Naive thymus-derived CD4-positive, alpha-beta T cell (primary cell): ENCODE measurements at regions of chr3 and their contacts with region 1.

Region 1: GRCh38 chr3:23888617-23889228 is 28.1 kb downstream of the NKIRAS1 start:
- DNase-seq: peak in 5 of 9 donors; percentile 24 to 47 (median 27)
- ATAC-seq: peak; percentile 76
- H3K4me3 ChIP-seq: no peak overlapping the region
- H3K4me3 Mint-ChIP-seq: no peak overlapping the region
- H3K27ac ChIP-seq: no peak overlapping the region
- H3K27ac Mint-ChIP-seq: peak overlapping the region in 4 of 9 donors; percentile 2 to 82 (median 36)
- H3K4me1 ChIP-seq: no peaks in the 10 kb centered on the region
- H3K4me1 Mint-ChIP-seq: peaks cover 0 to 4% (median 0%) of the 10 kb centered on the region in 7 donors
- H3K27me3 ChIP-seq: no peaks in the 10 kb centered on the region
- H3K27me3 Mint-ChIP-seq: no peaks in the 10 kb centered on the region

Region 2: DNA sequence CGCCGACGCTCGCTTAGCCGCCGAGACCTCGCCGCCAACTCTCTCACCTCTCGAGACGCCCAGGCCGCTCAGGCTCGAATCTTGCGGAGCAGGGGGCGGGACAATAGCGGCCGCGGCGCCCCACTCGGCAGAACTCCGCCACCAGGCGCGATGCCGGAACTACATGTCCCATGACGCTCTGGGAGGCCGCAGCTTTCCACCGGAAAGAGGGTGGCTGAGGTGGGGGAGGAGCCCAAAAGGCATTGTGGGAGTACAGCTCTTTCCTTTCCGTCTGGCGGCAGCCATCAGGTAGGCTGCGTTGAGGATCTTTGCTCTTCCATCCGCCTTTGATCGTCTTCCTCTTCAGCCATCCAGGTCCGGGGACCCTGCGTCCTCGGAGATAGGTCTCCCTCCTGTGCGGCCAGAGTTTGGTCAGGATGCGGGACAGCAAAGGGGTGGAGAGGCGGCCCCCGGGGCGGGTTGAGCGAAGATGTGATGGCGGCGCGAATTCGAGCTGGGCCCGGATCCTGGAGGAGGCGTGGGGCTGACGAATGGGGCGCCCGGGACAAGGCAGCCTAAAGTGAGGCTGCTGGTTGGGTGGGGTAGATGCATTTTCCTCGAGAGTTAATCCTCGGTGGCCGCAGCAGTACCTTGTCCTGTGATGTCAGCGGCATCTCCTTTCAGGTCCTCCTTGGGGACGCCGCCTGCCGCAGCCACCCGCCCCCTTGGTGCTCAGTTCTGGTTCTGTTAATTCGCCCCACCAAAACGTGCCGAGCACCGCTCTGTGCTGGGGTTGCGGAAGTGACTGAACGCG is 28.4 kb after region 1 on chr3 and contains the starts of genes NKIRAS1 and RPL15:
- CTCF ChIA-PET with region 1: interaction called, 7 read pairs
- POLR2A ChIA-PET with region 1: interaction called, 5 read pairs
- intact Hi-C with region 1: loop called (anchors 2 kb)
- DNase-seq: peak; percentile 90 to 98 (median 97)
- ATAC-seq: peak; percentile 97
- H3K4me3 ChIP-seq: peak within 1 kb of the TSS; percentile 88
- H3K4me3 Mint-ChIP-seq: peak within 1 kb of the TSS; percentile 92 to 100 (median 98)
- H3K27ac ChIP-seq: peak within 1 kb of the TSS; percentile 83
- H3K27ac Mint-ChIP-seq: peak within 1 kb of the TSS; percentile 97 to 99 (median 98)
- H3K4me1 ChIP-seq: peaks cover 14 to 18% of the 10 kb centered on the region in 2 donors
- H3K4me1 Mint-ChIP-seq: peaks cover 33 to 52% (median 49%) of the 10 kb centered on the region in 7 donors
- H3K27me3 ChIP-seq: no peaks in the 10 kb centered on the region
- H3K27me3 Mint-ChIP-seq: peaks cover 0 to 4% (median 0%) of the 10 kb centered on the region in 5 donors
- total RNA-seq, gene NKIRAS1: 2.2 to 6.4 (median 3.2) TPM
- total RNA-seq, gene RPL15: 1,489 to 2,250 (median 2,129) TPM

Region 3: DNA sequence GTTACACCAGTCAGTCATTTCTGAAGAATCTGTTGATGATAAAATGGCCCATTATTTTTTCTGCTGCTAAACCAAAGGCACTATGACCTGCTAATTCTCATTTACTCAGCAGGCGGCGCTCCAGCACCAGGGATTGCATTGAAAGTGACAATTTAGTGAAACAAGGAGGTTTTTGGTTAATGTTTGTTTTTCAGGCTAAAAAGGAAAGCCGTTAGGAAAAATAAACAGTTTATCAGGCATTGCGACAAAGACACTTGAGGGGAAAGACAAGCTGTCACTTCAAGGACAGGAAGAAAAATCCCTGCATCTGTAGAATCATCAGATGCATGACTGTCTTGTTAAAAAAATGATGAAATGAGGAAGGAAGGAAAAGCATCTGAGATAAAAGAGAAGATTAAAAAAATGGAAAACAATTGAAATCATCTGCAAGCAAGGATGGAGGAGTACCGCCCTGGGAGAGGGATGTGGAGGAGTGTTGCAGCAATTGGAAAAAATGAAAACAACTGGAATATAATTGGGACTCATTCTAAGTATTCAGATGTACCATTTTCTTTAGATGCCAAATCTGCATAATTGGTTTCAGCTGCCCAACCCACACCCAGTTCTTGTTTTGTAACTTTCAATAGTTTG is 110.4 kb after region 1 on chr3:
- CTCF ChIA-PET with region 1: interaction called, 4 read pairs
- POLR2A ChIA-PET with region 1: no interaction called
- intact Hi-C with region 1: loop called (anchors 1 to 2 kb)
- DNase-seq: peak in 8 of 9 donors; percentile 24 to 64 (median 29)
- ATAC-seq: peak; percentile 49
- H3K4me3 ChIP-seq: no peak overlapping the region
- H3K4me3 Mint-ChIP-seq: no peak overlapping the region
- H3K27ac ChIP-seq: no peak overlapping the region
- H3K27ac Mint-ChIP-seq: no peak overlapping the region
- H3K4me1 ChIP-seq: no peaks in the 10 kb centered on the region
- H3K4me1 Mint-ChIP-seq: peaks cover 0 to 6% (median 4%) of the 10 kb centered on the region in 7 donors
- H3K27me3 ChIP-seq: no peaks in the 10 kb centered on the region
- H3K27me3 Mint-ChIP-seq: peaks cover 0 to 20% (median 3%) of the 10 kb centered on the region in 5 donors

Region 4: DNA sequence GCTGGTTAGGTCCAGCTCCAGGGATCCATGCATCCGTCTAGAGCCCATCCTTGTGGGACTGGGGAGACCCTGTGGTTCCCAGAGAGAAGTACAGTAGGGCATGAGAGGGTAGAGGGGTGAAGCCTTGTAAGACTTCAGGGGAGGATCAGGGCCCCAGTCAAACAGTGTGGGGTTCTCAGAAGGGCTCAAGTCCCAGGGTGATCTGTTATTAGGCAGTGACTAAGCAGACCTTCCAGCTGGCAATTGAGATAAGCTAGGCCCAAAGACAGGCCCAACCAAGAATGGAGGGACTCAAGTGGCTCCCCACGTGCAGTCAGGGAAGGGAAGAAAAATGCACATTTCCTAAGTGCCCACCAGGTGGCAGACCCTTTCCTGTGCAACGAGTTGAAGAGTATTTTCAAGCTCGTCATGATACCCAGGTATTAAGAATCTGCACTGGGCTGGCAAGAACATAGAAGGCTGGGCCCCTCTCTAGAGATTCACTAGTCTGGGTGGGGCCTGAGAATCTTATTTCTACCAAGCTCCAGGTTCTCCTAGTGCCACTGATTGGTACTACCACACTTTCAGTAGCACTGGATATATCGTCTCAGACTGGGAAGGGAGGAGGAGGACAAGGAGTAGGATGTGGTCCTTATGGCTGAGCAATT is 297.1 kb after region 1 on chr3:
- CTCF ChIA-PET with region 1: no interaction called
- POLR2A ChIA-PET with region 1: no interaction called
- intact Hi-C with region 1: loop called in 1 of 2 experiments (anchors 2 kb)
- DNase-seq: peak in 3 of 9 donors; percentile 2 to 10 (median 3)
- ATAC-seq: peak; percentile 38
- H3K4me3 ChIP-seq: no peak overlapping the region
- H3K4me3 Mint-ChIP-seq: no peak overlapping the region
- H3K27ac ChIP-seq: no peak overlapping the region
- H3K27ac Mint-ChIP-seq: no peak overlapping the region
- H3K4me1 ChIP-seq: no peaks in the 10 kb centered on the region
- H3K4me1 Mint-ChIP-seq: no peaks in the 10 kb centered on the region
- H3K27me3 ChIP-seq: no peaks in the 10 kb centered on the region
- H3K27me3 Mint-ChIP-seq: peaks cover 0 to 2% (median 0%) of the 10 kb centered on the region in 5 donors

Region 5: GRCh38 chr3:24680214-24680967 is 791.7 kb after region 1 on chr3:
- CTCF ChIA-PET with region 1: no interaction called
- POLR2A ChIA-PET with region 1: no interaction called
- intact Hi-C with region 1: loop called in 1 of 2 experiments (anchors 5 kb)
- DNase-seq: peak in 6 of 9 donors; percentile 2 to 56 (median 8)
- ATAC-seq: peak; percentile 67
- H3K4me3 ChIP-seq: no peak overlapping the region
- H3K4me3 Mint-ChIP-seq: no peak overlapping the region
- H3K27ac ChIP-seq: no peak overlapping the region
- H3K27ac Mint-ChIP-seq: no peak overlapping the region
- H3K4me1 ChIP-seq: no peaks in the 10 kb centered on the region
- H3K4me1 Mint-ChIP-seq: peaks cover 0 to 12% (median 0%) of the 10 kb centered on the region in 7 donors
- H3K27me3 ChIP-seq: no peaks in the 10 kb centered on the region
- H3K27me3 Mint-ChIP-seq: peaks cover 6 to 52% (median 11%) of the 10 kb centered on the region in 5 donors